ENCODE measurements at regions of chr11 and their contacts with region 1.

Region 1: GRCh38 chr11:114439229-114440120 is at the start of gene REXO2:
- DNase-seq: peak; percentile 96
- ATAC-seq: peak; percentile 98 to 99 (median 99)
- H3K4me3 ChIP-seq: peak within 1 kb of the TSS; percentile 71 to 99 (median 85)
- H3K27ac ChIP-seq: peak within 1 kb of the TSS; percentile 69 to 91 (median 86)
- H3K4me1 ChIP-seq: peaks cover 4 to 46% (median 32%) of the 10 kb centered on the region in 9 donors
- H3K27me3 ChIP-seq: no peaks in the 10 kb centered on the region
- CTCF ChIP-seq: peak in 7 of 9 donors; percentile 18 to 62 (median 40)
- total RNA-seq, gene REXO2: 140 to 204 (median 174) TPM

Region 2: GRCh38 chr11:114348200-114349191 is 91.0 kb before region 1 on chr11:
- intact Hi-C with region 1: loop called in 3 of 10 experiments (anchors 5 to 10 kb)
- DNase-seq: peak in 1 of 2 donors; percentile 64
- ATAC-seq: peak in 6 of 8 donors; percentile 64 to 78 (median 73)
- H3K4me3 ChIP-seq: no peak overlapping the region
- H3K27ac ChIP-seq: no peak overlapping the region
- H3K4me1 ChIP-seq: peaks cover 0 to 8% (median 0%) of the 10 kb centered on the region in 9 donors
- H3K27me3 ChIP-seq: no peaks in the 10 kb centered on the region
- CTCF ChIP-seq: peak; percentile 35 to 72 (median 63)